ENCODE measurements at regions of chr7 and their contacts with region 1.

Region 1: DNA sequence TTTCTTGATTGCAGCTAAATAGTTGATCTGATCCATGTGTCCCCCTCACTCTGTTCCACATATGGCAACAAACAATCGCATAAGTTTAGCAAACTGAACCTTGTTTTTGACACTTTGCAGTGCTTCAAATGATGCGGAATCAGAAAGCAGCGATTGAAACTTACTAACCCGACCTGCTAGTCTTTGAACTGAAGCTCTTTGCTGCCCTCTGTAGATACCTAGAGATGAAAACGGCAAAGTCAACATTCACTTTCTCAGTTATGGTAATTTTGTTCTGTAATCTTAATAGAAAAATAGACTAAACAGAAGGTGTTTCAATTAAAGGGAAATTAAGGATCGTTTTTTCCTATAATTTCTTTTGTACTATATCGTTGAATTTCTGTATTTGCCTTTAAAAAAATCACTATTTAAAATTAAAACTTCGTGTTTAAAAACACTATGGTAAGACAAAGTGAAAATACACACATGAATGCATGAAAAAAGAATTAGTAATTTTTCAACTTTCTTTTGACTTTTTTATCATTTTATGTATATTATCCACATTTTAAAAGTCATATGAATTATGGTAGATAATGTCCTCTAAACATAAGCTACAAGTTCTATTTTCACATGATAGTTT is 276.5 kb downstream of the MAGI2 start:
- DNase-seq: no peak
- ATAC-seq: peak in 1 of 4 donors; percentile 63
- H3K4me3 ChIP-seq: no peak overlapping the region
- H3K27ac ChIP-seq: no peak overlapping the region
- H3K4me1 ChIP-seq: no peaks in the 10 kb centered on the region
- H3K27me3 ChIP-seq: no peaks in the 10 kb centered on the region
- CTCF ChIP-seq: peak; percentile 8 to 74 (median 54)
- POLR2A ChIP-seq: no peak

Region 2: DNA sequence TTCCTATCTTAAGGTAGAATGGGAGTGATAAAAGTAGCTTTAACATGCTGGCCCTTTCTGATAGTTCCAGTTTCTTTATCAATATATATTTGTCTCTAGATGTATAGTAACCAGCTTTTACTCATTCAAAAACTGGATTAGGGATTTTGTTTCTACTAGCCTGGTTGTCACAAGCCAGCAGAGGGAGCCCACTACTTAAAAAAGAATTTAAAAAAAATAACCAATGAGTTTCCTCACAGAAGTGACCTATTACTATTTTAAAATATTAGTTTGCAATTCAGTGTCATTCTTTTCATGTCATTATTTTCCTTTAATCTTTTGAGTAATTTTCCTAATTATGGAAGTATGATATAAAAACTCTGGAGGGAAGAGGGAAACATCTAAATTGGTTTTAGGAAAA is 1236.3 kb before region 1 on chr7:
- intact Hi-C with region 1: loop called in 3 of 10 experiments (anchors 5 to 10 kb)
- DNase-seq: no peak
- ATAC-seq: no peak
- H3K4me3 ChIP-seq: no peak overlapping the region
- H3K27ac ChIP-seq: no peak overlapping the region
- H3K4me1 ChIP-seq: peaks cover 0 to 2% (median 0%) of the 10 kb centered on the region in 12 donors
- H3K27me3 ChIP-seq: no peaks in the 10 kb centered on the region
- CTCF ChIP-seq: peak; percentile 25 to 78 (median 61)
- POLR2A ChIP-seq: no peak

Region 3: DNA sequence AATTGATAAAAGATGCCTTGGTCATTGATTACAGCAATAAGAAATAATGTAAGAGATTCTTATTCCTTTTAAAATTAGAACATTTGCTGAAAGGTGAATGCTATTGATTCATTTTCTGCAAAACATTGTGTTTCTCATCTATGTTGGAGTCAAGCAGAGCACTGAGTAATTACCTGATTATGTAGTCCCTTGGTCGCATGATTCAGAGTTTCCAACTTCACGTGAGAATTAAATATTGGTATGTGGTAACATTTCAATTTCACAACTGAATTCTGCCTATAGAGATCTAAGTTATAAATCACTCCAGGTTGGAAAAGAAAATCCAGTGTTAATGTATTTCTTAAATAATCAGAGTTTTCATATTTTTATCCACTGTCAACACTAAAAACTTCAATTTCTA is 677.0 kb before region 1 on chr7:
- intact Hi-C with region 1: loop called in 1 of 10 experiments (anchors 10 kb)
- DNase-seq: no peak
- ATAC-seq: no peak
- H3K4me3 ChIP-seq: no peak overlapping the region
- H3K27ac ChIP-seq: no peak overlapping the region
- H3K4me1 ChIP-seq: no peaks in the 10 kb centered on the region
- H3K27me3 ChIP-seq: no peaks in the 10 kb centered on the region
- CTCF ChIP-seq: no peak
- POLR2A ChIP-seq: no peak

Region 4: GRCh38 chr7:78510580-78511188 is 666.3 kb before region 1 on chr7:
- intact Hi-C with region 1: loop called in 6 of 10 experiments (anchors 2 to 10 kb)
- DNase-seq: peak in 2 of 5 donors; percentile 7 to 30
- ATAC-seq: peak in 1 of 4 donors; percentile 38
- H3K4me3 ChIP-seq: no peak overlapping the region
- H3K27ac ChIP-seq: no peak overlapping the region
- H3K4me1 ChIP-seq: no peaks in the 10 kb centered on the region
- H3K27me3 ChIP-seq: no peaks in the 10 kb centered on the region
- CTCF ChIP-seq: peak in 10 of 12 donors; percentile 22 to 61 (median 47)
- POLR2A ChIP-seq: no peak

Region 5: GRCh38 chr7:78939669-78940068 is 237.3 kb before region 1 on chr7:
- intact Hi-C with region 1: loop called in 1 of 10 experiments (anchors 10 kb)
- DNase-seq: no peak
- ATAC-seq: no peak
- H3K4me3 ChIP-seq: no peak overlapping the region
- H3K27ac ChIP-seq: no peak overlapping the region
- H3K4me1 ChIP-seq: no peaks in the 10 kb centered on the region
- H3K27me3 ChIP-seq: no peaks in the 10 kb centered on the region
- CTCF ChIP-seq: no peak
- POLR2A ChIP-seq: no peak

Measured in heart left ventricle (tissue), 16 donors.